ENCODE measurements at regions of chr12 and their contacts with region 1.

Region 1: GRCh38 chr12:15435597-15435996 is 113.3 kb downstream of the PTPRO start:
- DNase-seq: no peak
- H3K4me3 ChIP-seq: no peak overlapping the region
- H3K27ac ChIP-seq: no peak overlapping the region
- H3K4me1 ChIP-seq: no peaks in the 10 kb centered on the region
- H3K27me3 ChIP-seq: no peaks in the 10 kb centered on the region
- CTCF ChIP-seq: no peak

Region 2: DNA sequence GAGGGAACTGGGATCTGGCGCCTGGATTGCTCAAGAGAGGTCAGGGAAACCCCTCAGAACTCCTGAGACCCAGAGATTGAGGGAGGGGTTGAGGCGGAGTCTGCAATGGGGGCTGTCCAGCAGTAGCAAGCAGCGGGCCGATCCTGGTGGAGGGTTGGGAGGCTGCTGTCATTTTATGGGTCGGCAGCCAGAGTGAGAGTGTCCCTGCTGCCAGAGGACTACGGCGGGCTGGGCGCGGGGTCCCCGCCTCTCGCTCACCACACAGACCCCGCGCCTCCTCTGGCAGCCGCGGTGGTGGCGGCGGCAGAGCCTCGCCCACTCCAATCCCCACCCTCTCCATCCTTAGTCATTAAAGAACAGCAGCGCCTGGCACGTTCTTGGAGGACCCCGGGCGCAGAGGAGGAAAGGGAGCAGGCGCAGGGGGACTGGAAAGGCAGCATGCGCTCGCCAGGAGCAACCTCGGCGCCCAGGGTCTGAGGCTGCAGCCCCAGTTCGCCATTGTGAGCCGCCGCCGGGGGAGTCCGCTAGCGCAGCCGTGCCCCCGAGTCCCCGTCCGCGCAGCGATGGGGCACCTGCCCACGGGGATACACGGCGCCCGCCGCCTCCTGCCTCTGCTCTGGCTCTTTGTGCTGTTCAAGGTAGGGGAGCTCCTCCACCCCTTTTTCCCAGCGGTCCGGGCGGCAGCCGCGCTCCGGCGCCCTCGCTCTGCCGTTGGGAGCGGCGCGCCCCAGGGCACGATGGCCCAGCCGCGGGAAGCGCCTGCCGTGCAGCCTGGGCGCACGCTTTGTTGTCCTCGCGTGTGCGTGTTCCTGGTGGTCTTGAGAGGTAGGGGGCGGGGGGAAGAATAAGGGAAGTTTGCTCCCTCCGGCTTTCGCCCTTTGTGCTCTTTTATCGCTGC is 113.2 kb before region 1 on chr12 and contains the start of gene PTPRO:
- CTCF ChIA-PET with region 1: no interaction called
- dilution Hi-C with region 1: no loop called
- in situ Hi-C with region 1: no loop called
- intact Hi-C with region 1: loop called (anchors 10 kb)
- DNase-seq: peak; percentile 23
- H3K4me3 ChIP-seq: peak within 1 kb of the TSS; percentile 4 to 56 (median 24)
- H3K27ac ChIP-seq: no peak within 1 kb of the TSS
- H3K4me1 ChIP-seq: peaks cover 10% of the 10 kb centered on the region
- H3K27me3 ChIP-seq: peaks cover 8% of the 10 kb centered on the region
- CTCF ChIP-seq: no peak
- total RNA-seq, gene PTPRO: 0.21 TPM in 1 of 2 donors, not detected in the other

Region 3: DNA sequence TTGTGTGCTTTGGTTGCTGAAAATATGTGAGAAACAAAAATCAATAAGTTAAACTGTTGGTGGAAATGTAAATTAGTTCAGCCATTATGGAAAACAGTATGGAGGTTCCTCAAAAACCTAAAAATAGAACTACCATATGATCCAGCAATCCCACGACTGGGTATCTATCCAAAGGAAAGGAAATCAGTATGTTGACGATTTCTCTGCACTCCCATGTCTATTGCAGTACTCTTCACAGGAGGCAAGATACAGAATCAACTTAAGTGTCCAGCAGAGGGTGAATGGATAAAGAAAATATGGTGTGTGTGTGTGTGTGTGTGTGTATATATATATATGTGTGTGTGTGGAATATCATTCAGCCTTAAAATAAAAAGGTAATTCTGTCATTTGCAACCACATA is 46.2 kb after region 1 on chr12:
- CTCF ChIA-PET with region 1: no interaction called
- dilution Hi-C with region 1: no loop called
- in situ Hi-C with region 1: no loop called
- intact Hi-C with region 1: no loop called
- DNase-seq: no peak
- H3K4me3 ChIP-seq: no peak overlapping the region
- H3K27ac ChIP-seq: no peak overlapping the region
- H3K4me1 ChIP-seq: no peaks in the 10 kb centered on the region
- H3K27me3 ChIP-seq: no peaks in the 10 kb centered on the region
- CTCF ChIP-seq: no peak

Measured in mammary epithelial cell (primary cell).